ENCODE measurements at regions of chr1 and their contacts with region 1.

Region 1: GRCh38 chr1:52296345-52296744 is 69.7 kb downstream of the CC2D1B start:
- DNase-seq: peak; percentile 72
- CTCF ChIP-seq: peak; percentile 70

Region 2: DNA sequence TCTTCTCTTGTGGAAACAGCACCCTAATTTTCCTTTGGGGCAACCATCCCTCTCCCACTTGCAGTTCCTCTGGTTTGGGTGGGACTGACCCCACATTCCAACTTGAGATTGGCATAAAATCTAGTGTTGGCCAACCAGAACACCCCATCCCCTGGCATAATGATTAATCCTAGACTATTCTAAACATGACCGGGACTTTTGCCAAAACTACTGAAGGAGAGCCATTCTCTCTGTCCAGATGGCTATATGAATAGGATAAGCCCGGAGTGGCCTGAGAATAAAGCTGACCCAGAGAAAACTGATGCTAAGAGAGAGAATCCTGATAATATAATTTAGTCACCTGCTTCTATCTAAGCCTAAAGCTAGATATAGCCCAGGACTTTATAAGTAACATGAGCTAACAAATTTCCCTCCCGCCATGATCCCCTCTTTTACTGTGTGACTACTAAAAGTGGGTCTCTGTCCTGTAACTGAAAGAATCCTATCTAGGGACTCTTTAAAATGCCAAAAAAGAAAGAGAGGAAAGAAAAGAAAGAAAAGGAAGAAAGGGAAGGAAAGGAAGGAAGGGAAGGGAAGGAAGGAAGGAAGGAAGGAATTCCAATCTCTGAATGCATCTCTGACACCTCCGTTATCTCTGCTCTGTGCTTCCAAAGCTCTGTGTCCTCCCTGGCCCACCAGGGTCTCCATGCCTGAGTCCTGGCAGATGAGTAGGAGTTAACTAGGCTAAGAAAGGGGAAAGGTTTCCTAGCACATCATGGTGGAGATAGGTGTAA is 389.9 kb before region 1 on chr1:
- in situ Hi-C with region 1: loop called (anchors 25 kb)
- DNase-seq: no peak
- CTCF ChIP-seq: no peak